GM23248 (cell line): ENCODE measurements at regions of chr16 and their contacts with region 1.

Region 1: GRCh38 chr16:9817586-9817985 is 364.6 kb downstream of the GRIN2A start:
- DNase-seq: no peak
- H3K4me3 ChIP-seq: no peak overlapping the region
- H3K27ac ChIP-seq: no peak overlapping the region
- H3K4me1 ChIP-seq: no peaks in the 10 kb centered on the region
- H3K27me3 ChIP-seq: 0 out of 2 replicates have a peak, but pooled peaks cover 6% of the 10 kb centered on the region

Region 2: GRCh38 chr16:9755081-9755480 is 62.5 kb before region 1 on chr16:
- in situ Hi-C with region 1: loop called (anchors 10 kb)
- DNase-seq: no peak
- H3K4me3 ChIP-seq: no peak overlapping the region
- H3K27ac ChIP-seq: no peak overlapping the region
- H3K4me1 ChIP-seq: no peaks in the 10 kb centered on the region
- H3K27me3 ChIP-seq: no peaks in the 10 kb centered on the region